ENCODE measurements at regions of chr20 and their contacts with region 1.

Region 1: GRCh38 chr20:18587665-18588573 is at the start of gene DTD1:
- DNase-seq: peak; percentile 97
- ATAC-seq: peak; percentile 98
- total RNA-seq, gene DTD1: 11.4 TPM

Region 2: GRCh38 chr20:18331694-18332093 is 256.2 kb before region 1 on chr20:
- intact Hi-C with region 1: no loop called
- DNase-seq: no peak
- ATAC-seq: no peak

Region 3: GRCh38 chr20:18541741-18542140 is 46.2 kb before region 1 on chr20:
- intact Hi-C with region 1: no loop called
- DNase-seq: no peak
- ATAC-seq: no peak

Region 4: DNA sequence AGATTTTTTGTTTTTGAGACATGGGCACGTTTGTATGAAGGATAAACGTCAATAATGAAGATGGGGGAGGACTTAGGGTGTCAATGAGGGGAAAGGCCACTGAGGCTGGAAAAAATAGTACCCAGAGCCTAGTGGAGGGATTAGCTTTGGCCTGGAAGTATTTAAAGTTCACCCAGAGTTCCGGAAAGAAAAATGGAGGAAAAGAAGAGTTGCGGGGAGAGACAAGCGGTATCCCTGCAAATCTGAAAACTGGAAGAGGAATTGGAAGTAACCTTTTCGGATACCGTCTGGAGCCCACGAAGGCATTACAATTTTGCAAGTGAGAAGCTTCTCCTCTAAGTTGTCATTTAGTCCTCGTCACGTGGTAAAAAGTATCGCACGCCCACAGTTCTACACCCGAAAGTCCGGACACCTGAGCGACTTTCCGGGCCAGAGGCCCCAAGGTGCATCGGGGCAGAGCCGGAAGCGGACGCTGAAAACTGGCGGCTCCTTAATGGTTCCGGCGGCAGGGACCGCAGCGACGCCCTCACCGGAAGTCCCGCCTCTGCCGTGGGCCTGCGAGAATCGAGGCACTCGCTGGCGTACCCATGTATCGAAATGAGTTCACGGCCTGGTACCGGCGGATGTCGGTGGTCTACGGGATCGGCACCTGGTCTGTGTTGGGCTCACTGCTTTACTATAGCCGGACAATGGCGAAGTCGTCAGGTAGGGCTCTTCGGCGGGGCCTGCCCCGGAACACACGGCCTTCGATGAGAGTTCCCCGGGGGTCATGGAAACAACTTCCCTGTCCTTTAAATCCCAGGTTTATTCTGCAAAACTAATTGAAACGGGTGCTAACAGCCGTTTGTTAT is 20.8 kb before region 1 on chr20 and contains the start of gene SMIM26:
- intact Hi-C with region 1: loop called (anchors 2 kb)
- DNase-seq: peak; percentile 97
- ATAC-seq: peak; percentile 100
- total RNA-seq, gene SMIM26: 111 TPM

Region 5: DNA sequence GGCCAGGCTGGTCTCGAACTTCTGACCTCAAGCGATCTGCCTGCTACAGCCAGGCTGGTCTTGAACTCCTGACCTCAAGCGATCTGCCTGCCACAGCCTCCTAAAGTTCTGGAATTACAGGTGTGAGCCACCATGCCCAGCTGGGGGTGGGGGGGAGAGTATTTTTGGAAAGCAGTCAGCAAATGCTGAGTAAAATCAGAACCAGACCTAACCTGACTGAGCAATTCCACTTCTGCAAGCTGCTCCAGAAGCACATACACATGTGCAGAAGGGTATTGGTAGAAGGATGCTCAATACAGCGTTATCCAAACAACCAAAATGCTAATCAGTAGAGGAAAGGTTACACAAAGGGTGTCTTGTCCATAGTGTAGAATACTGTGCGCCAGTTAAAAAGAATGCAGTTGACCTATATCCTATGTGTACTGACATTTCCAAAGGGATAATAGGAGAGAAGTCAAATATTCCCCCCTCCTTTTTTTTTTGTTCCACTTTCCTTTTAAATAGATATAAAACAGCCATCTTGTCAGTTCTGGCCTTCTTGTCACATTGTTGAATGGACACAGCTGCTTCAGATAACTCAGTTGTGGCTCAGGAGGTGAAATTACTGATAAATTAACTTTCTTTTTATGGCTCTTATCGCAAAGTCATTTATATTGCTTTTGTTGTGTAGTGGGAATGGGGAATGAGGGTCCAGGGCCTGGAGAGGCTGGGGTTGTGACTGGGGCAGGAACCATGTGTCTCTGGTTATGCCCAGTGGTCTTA is 74.5 kb after region 1 on chr20:
- intact Hi-C with region 1: no loop called
- DNase-seq: no peak
- ATAC-seq: no peak

Region 6: DNA sequence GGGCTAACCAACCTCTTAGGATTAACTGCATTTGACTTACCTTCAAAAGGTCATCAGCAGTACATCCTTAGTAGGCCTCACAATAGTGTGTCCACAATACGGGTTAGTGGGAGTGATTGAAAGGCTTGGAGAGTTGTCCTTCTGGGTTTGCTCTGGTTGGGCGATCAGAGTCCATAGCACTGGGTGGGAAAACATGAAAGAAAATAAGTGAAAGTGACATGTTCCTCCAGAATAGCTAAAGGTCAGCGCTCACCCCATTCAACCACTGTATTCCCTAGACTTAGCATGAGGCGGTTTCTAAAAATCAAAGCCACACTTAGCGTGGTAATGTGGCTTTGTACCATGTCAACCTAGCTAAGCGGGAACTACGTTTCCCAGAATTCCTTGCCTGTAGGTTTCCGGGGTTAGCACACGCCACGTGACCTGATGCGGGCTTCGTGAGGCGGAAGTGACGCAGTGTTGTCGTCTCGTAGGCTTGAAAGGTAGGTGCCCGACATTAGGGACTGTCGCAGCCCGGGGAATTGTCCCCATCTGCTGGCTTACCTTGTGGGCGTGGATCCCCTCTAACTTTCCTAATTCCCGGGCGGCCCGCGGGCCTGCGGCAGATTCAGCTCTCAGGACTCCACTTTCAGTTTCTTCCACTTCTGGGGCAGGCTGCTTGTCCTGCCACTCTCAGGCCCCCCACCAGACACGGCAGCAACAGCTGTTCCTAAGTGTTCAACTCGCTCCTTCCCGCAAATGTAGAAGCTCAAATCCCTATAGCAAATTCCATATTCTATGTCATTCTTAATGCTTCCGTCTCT is 205.9 kb after region 1 on chr20:
- intact Hi-C with region 1: loop called (anchors 10 kb)
- DNase-seq: peak; percentile 95
- ATAC-seq: peak; percentile 99

Measured in Right ventricle myocardium inferior (tissue), 1 donor.